Naive thymus-derived CD8-positive, alpha-beta T cell (primary cell): ENCODE measurements at regions of chr7 and their contacts with region 1.

Region 1: GRCh38 chr7:108569381-108570145 is at the starts of genes DNAJB9 and THAP5:
- DNase-seq: peak; percentile 93 to 100 (median 100)
- ATAC-seq: peak; percentile 88 to 90
- H3K4me3 Mint-ChIP-seq: peak within 1 kb of the TSS; percentile 94 to 100 (median 98)
- H3K27ac Mint-ChIP-seq: peak within 1 kb of the TSS; percentile 99 to 100 (median 100)
- H3K4me1 Mint-ChIP-seq: peaks cover 15 to 80% (median 48%) of the 10 kb centered on the region in 4 donors
- H3K27me3 Mint-ChIP-seq: no peaks in the 10 kb centered on the region
- polyA plus RNA-seq, gene DNAJB9: 21.3 to 47.1 (median 29.2) TPM
- polyA plus RNA-seq, gene THAP5: 13.3 to 27.9 (median 15.0) TPM

Region 2: DNA sequence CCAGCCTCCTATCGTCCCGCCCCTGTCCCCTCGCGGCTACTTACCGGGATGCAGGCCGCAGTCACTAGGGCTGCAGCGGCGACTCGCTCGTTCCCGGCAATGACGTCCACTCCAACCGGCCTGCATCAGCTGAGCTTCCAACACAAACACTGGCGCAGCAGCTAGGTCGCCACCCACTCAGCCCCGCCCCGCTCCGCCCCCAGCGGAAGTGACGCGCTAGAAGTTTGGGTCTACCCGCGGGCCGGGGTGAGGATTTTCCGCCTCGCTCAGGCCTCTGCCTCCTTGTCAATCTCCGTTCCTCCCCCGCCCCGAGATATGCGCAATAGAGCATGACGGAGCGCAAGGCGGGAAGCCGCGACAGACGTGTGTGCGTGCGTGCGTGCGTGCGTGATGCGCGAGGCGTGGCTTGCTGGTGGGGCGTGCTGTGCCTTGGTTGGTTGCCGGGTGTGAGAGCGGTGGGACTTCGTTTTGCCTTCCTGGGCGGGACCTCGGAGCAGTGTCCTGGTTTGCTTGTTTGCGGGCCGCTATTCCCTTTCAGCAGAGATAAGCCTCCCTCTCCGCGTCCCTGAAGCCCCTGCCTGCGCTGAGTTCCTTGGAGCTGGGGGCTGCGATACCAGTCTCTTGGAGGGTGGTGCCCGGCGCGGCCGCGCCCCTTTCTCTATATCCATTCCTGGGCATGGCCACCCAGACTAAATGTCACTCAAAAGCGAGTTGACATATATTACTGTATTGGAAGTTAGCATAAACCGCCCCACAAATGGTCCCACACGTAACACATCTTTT is 43.4 kb before region 1 on chr7 and contains the start of gene PNPLA8:
- POLR2A ChIA-PET with region 1: interaction called, 53 read pairs
- DNase-seq: peak; percentile 99 to 100 (median 100)
- ATAC-seq: peak; percentile 87 to 88
- H3K4me3 Mint-ChIP-seq: peak within 1 kb of the TSS; percentile 92 to 99 (median 97)
- H3K27ac Mint-ChIP-seq: peak within 1 kb of the TSS; percentile 96 to 100 (median 100)
- H3K4me1 Mint-ChIP-seq: peaks cover 20 to 56% (median 40%) of the 10 kb centered on the region in 4 donors
- H3K27me3 Mint-ChIP-seq: peaks cover 0 to 1% (median 0%) of the 10 kb centered on the region in 5 donors
- polyA plus RNA-seq, gene PNPLA8: 24.0 to 26.5 (median 24.3) TPM

Region 3: DNA sequence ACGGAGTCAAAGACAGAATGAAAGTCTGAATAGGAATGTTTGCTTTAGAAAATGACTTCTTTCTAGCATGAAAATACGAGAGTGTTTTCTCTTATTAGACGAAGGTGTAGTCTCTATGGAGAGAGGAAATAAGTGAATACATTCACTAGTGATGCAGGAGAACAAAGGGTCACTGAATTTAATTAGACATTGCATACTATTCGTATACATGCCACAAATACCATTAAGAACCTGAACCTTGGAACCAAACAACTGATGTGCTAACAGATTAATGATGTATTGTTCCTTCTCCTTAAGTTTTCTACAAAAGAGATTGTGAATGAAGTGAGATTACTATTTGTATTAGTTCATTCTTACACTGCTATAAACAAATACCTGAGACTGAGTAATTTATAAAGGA is 10.3 kb before region 1 on chr7:
- POLR2A ChIA-PET with region 1: interaction called, 11 read pairs
- DNase-seq: no peak
- ATAC-seq: no peak
- H3K4me3 Mint-ChIP-seq: no peak overlapping the region
- H3K27ac Mint-ChIP-seq: no peak overlapping the region
- H3K4me1 Mint-ChIP-seq: peaks cover 0 to 16% (median 4%) of the 10 kb centered on the region in 4 donors
- H3K27me3 Mint-ChIP-seq: no peaks in the 10 kb centered on the region

Region 4: GRCh38 chr7:108598153-108598552 is 28.6 kb after region 1 on chr7:
- POLR2A ChIA-PET with region 1: no interaction called
- DNase-seq: no peak
- ATAC-seq: no peak
- H3K4me3 Mint-ChIP-seq: no peak overlapping the region
- H3K27ac Mint-ChIP-seq: no peak overlapping the region
- H3K4me1 Mint-ChIP-seq: no peaks in the 10 kb centered on the region
- H3K27me3 Mint-ChIP-seq: peaks cover 0 to 19% (median 14%) of the 10 kb centered on the region in 5 donors

Region 5: DNA sequence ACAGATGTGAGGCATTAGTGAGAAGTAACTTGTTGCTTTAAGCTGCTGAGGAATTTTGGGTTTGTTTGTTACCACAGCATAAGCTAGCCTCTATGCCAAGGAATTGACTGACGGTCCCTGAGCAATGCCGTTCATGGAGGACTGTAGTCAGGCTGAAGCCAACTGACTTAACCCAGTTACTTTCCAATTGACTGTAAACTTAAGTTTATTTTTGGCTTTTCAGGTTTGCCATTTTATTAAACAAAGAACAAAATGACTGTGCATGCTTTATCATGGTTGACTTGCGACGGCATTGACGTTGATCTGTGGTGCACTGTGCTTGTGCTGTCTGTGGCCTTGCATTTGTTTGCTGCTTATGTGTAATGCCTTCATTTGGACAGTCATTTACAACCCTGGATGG is 53.7 kb after region 1 on chr7:
- POLR2A ChIA-PET with region 1: no interaction called
- DNase-seq: no peak
- ATAC-seq: no peak
- H3K4me3 Mint-ChIP-seq: no peak overlapping the region
- H3K27ac Mint-ChIP-seq: no peak overlapping the region
- H3K4me1 Mint-ChIP-seq: no peaks in the 10 kb centered on the region
- H3K27me3 Mint-ChIP-seq: peaks cover 11 to 29% (median 22%) of the 10 kb centered on the region in 5 donors

Region 6: GRCh38 chr7:109456120-109456519 is 886.6 kb after region 1 on chr7:
- POLR2A ChIA-PET with region 1: no interaction called
- DNase-seq: no peak
- ATAC-seq: no peak
- H3K4me3 Mint-ChIP-seq: no peak overlapping the region
- H3K27ac Mint-ChIP-seq: no peak overlapping the region
- H3K4me1 Mint-ChIP-seq: no peaks in the 10 kb centered on the region
- H3K27me3 Mint-ChIP-seq: no peaks in the 10 kb centered on the region